ENCODE measurements at regions of chr16 and their contacts with region 1.

Region 1: GRCh38 chr16:22297114-22297878 is at the start of gene POLR3E:
- DNase-seq: peak; percentile 96 to 100 (median 98)

Region 2: GRCh38 chr16:22007509-22008214 is 289.6 kb before region 1 on chr16 and contains the start of gene MOSMO:
- intact Hi-C with region 1: loop called (anchors 5 kb)
- DNase-seq: peak; percentile 71 to 97 (median 80)

Region 3: DNA sequence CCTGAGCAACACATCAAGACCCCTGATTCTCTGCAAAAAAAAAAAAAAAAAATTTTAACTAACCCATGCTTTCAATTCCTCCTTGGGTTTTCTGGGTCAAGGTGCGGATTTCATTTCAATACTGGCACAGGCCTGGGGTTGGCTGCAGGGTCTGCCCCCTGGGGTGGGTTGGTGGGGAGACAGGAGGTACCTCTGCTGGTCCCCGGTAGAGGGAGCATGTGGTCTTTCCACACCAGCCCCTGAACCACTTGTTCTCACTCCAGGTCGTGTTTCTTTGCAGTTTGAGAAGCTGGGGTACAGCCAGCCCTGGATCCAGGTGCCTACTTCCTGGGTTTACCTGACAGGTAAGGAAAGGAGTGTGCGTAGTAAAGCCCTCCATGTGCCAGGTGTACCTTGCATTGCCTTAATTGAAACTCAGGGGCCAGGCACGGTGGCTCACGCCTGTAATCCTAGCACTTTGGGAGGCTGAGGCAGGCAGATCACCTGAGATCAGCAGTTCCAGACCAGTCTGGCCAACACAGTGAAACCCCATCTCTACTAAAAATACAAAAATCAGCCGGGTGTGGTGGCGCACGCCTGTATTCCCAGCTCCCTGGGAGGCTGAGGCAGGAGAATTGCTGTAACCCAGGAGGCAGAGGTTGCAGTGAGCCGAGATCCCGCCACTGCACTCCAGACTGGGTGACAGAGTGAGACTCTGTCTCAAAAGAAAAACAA is 113.2 kb before region 1 on chr16:
- intact Hi-C with region 1: no loop called
- DNase-seq: peak in 2 of 10 donors; percentile 26 to 47

Region 4: GRCh38 chr16:22206013-22206841 is 91.1 kb before region 1 on chr16 and contains the start of gene EEF2K:
- intact Hi-C with region 1: loop called (anchors 1 kb)
- DNase-seq: peak; percentile 65 to 97 (median 78)

Measured in posterior cingulate gyrus (tissue), 11 donors.